Panc1 (cell line): ENCODE measurements at regions of chr13 and their contacts with region 1.

Region 1: GRCh38 chr13:89925107-89925506 is 1422.4 kb upstream of the MIR17HG start:
- DNase-seq: peak; percentile 2
- ATAC-seq: no peak
- H3K4me3 ChIP-seq: no peak overlapping the region
- H3K27ac ChIP-seq: no peak overlapping the region
- H3K4me1 ChIP-seq: no peaks in the 10 kb centered on the region
- H3K27me3 ChIP-seq: no peaks in the 10 kb centered on the region
- CTCF ChIP-seq: peak; percentile 62

Region 2: GRCh38 chr13:89726690-89727435 is 198.2 kb before region 1 on chr13:
- CTCF ChIA-PET with region 1: no interaction called
- POLR2A ChIA-PET with region 1: no interaction called
- in situ Hi-C with region 1: no loop called
- intact Hi-C with region 1: loop called (anchors 10 kb)
- DNase-seq: peak; percentile 22
- ATAC-seq: peak; percentile 38; the same call in 1 of the 2 replicates
- H3K4me3 ChIP-seq: no peak overlapping the region
- H3K27ac ChIP-seq: no peak overlapping the region
- H3K4me1 ChIP-seq: no peaks in the 10 kb centered on the region
- H3K27me3 ChIP-seq: no peaks in the 10 kb centered on the region
- CTCF ChIP-seq: no peak

Region 3: GRCh38 chr13:90171649-90172048 is 246.5 kb after region 1 on chr13:
- CTCF ChIA-PET with region 1: no interaction called
- POLR2A ChIA-PET with region 1: no interaction called
- in situ Hi-C with region 1: no loop called
- intact Hi-C with region 1: no loop called
- DNase-seq: no peak
- ATAC-seq: no peak
- H3K4me3 ChIP-seq: no peak overlapping the region
- H3K27ac ChIP-seq: no peak overlapping the region
- H3K4me1 ChIP-seq: no peaks in the 10 kb centered on the region
- H3K27me3 ChIP-seq: no peaks in the 10 kb centered on the region
- CTCF ChIP-seq: no peak